ENCODE measurements at regions of chr16 and their contacts with region 1.

Region 1: GRCh38 chr16:75464130-75464918 is at the start of gene TMEM170A:
- DNase-seq: peak; percentile 97 to 100 (median 99)

Region 2: GRCh38 chr16:75319513-75320411 is 144.6 kb before region 1 on chr16:
- intact Hi-C with region 1: no loop called
- DNase-seq: no peak

Region 3: GRCh38 chr16:75679366-75679765 is 215.0 kb after region 1 on chr16:
- intact Hi-C with region 1: no loop called
- DNase-seq: no peak

Region 4: DNA sequence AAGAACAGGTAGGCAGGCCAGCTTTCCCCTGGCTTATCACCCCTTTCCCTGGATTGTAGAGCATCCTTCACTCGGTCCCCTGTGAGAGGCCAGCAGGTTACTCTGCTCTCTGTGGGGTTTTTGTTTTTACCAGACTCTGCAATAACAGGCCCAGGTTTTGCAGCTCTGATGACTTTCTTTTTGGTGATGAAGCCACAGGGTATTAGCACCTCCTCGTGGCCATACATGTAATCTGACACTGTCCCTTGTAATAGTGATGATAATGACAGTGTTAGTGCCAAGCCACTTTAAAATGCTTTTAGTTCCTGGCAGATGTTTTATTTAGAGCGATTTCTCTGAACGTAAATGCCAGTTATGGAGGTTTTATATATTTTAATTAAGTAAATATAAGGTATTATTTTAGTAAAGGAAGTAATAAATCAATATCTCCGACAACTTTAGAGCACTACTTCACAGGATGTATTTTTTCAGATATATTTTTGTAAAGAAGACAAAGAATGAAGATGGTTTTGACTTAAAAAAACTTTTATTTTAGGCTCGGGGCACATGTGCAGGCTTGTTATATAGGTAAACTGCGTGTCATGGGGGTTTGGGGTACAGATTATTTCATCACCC is 299.9 kb after region 1 on chr16:
- intact Hi-C with region 1: loop called (anchors 10 kb)
- DNase-seq: peak in 40 of 42 donors; percentile 16 to 87 (median 65)